Activated CD8-positive, alpha-beta T cell treated with anti-CD3 and anti-CD28 coated beads, Interleukin-2, amount 10 ng/mL, durations not matched to agents 7 days and 5 days (primary cell): ENCODE measurements at regions of chr5 and their contacts with region 1.

Region 1: DNA sequence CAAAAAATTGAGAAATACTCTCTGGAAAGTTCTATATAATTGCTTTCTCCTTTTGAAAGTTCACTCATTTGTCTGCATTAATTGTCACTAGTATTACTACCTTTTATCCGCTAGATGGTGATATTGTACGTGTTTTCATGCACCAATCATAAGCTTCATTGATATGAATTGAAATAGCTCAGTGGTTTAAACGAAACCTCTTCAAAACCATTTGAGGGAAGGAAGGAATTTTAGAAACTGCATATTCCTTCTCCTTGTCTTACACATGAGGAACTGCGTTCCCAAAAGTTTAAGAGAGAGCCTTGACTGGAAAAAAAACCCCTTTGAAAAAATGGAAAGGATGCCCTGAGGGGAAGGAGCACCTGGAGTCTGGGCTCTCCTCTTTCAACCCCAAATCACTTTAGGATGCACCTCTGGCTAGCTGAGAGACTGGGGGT is 98.6 kb downstream of the YTHDC2 start:
- DNase-seq: no peak
- ATAC-seq: peak; percentile 67
- H3K4me3 Mint-ChIP-seq: no peak overlapping the region
- H3K27ac Mint-ChIP-seq: no peak overlapping the region
- H3K4me1 Mint-ChIP-seq: peaks cover 12% of the 10 kb centered on the region
- H3K27me3 Mint-ChIP-seq: peaks cover 27% of the 10 kb centered on the region

Region 2: DNA sequence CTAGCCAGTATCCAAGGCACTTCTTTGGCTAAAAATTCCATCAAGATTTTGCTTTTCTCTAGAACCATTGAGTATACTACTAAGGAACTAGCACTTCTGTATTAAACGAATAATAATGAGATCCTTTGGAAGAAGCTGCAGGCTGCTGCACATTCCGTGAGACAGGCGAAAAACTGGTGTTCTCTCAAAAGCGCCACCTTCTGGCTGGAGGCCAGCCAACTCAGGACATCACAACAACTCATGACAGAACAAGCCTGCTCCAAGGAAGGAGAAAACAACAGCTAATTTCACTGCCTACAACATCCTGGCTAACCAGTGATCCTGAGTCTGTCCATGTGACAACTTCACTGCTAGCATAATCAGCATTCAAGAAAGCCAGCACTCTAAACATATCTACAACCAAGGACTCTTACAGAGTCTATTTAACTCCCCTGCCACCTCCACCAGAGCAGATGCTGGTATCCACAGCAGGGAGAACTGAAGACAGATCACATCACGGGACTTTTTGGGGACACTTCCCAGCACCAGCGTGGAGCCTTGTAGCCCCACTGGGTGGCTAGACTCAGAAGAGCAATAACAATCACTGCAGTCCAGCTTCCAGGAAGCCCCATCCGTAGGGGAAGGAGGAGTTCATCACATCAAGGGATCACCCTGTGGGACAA is 51.9 kb after region 1 on chr5:
- CTCF ChIA-PET with region 1: interaction called, 60 read pairs
- POLR2A ChIA-PET with region 1: no interaction called
- DNase-seq: peak; percentile 51
- ATAC-seq: peak; percentile 44
- H3K4me3 Mint-ChIP-seq: no peak overlapping the region
- H3K27ac Mint-ChIP-seq: no peak overlapping the region
- H3K4me1 Mint-ChIP-seq: no peaks in the 10 kb centered on the region
- H3K27me3 Mint-ChIP-seq: peaks cover 17% of the 10 kb centered on the region

Region 3: GRCh38 chr5:114449860-114450421 is 837.9 kb after region 1 on chr5:
- CTCF ChIA-PET with region 1: interaction called, 39 read pairs
- POLR2A ChIA-PET with region 1: no interaction called
- DNase-seq: peak; percentile 53
- ATAC-seq: peak; percentile 90
- H3K4me3 Mint-ChIP-seq: no peak overlapping the region
- H3K27ac Mint-ChIP-seq: no peak overlapping the region
- H3K4me1 Mint-ChIP-seq: no peaks in the 10 kb centered on the region
- H3K27me3 Mint-ChIP-seq: peaks cover 3% of the 10 kb centered on the region